CD8-positive, alpha-beta T cell (primary cell): ENCODE measurements at regions of chr9 and their contacts with region 1.

Region 1: GRCh38 chr9:18255158-18255629 is 218.8 kb upstream of the ADAMTSL1 start:
- DNase-seq: peak; percentile 25 to 81 (median 71)
- ATAC-seq: peak; percentile 78
- H3K4me3 ChIP-seq: no peak overlapping the region
- H3K4me3 Mint-ChIP-seq: no peak overlapping the region
- H3K27ac ChIP-seq: no peak overlapping the region
- H3K27ac Mint-ChIP-seq: no peak overlapping the region
- H3K4me1 ChIP-seq: no peaks in the 10 kb centered on the region
- H3K4me1 Mint-ChIP-seq: no peaks in the 10 kb centered on the region
- H3K27me3 ChIP-seq: no peaks in the 10 kb centered on the region
- H3K27me3 Mint-ChIP-seq: peaks cover 9% of the 10 kb centered on the region
- CTCF ChIP-seq: peak; percentile 100

Region 2: DNA sequence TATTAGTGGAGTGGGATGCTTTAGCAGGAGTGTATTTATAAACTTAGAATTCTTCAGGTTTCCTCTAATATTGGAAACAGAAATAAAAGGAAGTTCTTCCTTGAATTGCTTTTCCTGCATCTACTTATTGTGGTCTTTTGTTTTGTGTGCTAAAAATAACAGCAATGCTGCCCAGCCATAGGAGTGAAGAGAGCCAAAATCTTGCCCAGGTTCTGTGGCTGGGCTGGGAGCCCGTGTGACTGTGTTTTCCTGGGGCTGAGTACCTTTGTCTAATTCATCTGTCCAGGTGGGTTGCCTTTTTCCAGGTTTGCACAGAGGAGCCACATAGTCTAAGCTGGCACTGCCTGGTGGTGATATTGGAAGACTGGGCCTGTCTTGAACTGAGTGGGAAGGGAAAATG is 39.0 kb after region 1 on chr9:
- CTCF ChIA-PET with region 1: no interaction called
- POLR2A ChIA-PET with region 1: no interaction called
- intact Hi-C with region 1: no loop called
- DNase-seq: no peak
- ATAC-seq: no peak
- H3K4me3 ChIP-seq: no peak overlapping the region
- H3K4me3 Mint-ChIP-seq: no peak overlapping the region
- H3K27ac ChIP-seq: no peak overlapping the region
- H3K27ac Mint-ChIP-seq: no peak overlapping the region
- H3K4me1 ChIP-seq: no peaks in the 10 kb centered on the region
- H3K4me1 Mint-ChIP-seq: no peaks in the 10 kb centered on the region
- H3K27me3 ChIP-seq: no peaks in the 10 kb centered on the region
- H3K27me3 Mint-ChIP-seq: peaks cover 3% of the 10 kb centered on the region
- CTCF ChIP-seq: no peak

Region 3: GRCh38 chr9:19331877-19332276 is 1076.7 kb after region 1 on chr9:
- CTCF ChIA-PET with region 1: no interaction called
- POLR2A ChIA-PET with region 1: no interaction called
- intact Hi-C with region 1: loop called in 1 of 2 experiments (anchors 10 kb)
- DNase-seq: no peak
- ATAC-seq: no peak
- H3K4me3 ChIP-seq: no peak overlapping the region
- H3K4me3 Mint-ChIP-seq: no peak overlapping the region
- H3K27ac ChIP-seq: no peak overlapping the region
- H3K27ac Mint-ChIP-seq: no peak overlapping the region
- H3K4me1 ChIP-seq: no peaks in the 10 kb centered on the region
- H3K4me1 Mint-ChIP-seq: no peaks in the 10 kb centered on the region
- H3K27me3 ChIP-seq: no peaks in the 10 kb centered on the region
- H3K27me3 Mint-ChIP-seq: no peaks in the 10 kb centered on the region
- CTCF ChIP-seq: no peak

Region 4: DNA sequence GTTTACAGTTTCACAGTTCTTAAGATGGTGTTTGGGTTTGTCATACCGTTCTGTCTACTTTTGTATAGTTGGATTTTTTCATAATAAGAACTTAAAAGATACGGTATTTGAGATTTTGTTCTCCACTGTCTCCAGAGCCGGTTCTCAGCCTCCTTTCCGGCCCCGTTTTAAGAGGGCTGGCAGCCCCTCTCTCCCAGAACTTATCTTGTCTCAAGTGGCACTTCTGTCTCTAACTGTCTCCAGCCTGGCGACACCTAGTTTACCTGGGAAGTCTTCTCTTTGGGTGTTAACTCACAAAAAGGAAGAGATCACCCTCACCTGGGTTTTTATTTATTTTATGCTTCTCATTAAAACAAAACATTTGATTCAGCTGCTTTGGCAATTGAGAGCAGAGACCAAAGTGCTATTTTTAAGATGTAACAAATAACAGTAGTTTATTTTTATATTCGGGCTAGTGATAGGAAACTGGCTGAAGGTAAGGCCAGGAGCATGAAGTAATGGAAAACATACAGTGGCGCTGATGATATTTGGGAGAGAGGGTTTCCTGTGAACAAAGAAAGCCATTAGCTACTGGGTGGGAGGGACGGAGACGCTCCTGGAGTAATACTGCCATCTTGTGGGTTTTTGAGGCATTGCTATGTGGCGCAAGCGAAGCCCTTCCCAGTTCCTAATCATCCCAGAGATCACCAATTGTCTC is 1202.0 kb after region 1 on chr9:
- CTCF ChIA-PET with region 1: interaction called, 14 read pairs
- POLR2A ChIA-PET with region 1: no interaction called
- intact Hi-C with region 1: loop called in 1 of 2 experiments (anchors 1 kb)
- DNase-seq: peak; percentile 10 to 81 (median 59)
- ATAC-seq: peak; percentile 96
- H3K4me3 ChIP-seq: no peak overlapping the region
- H3K4me3 Mint-ChIP-seq: peak overlapping the region; percentile 24
- H3K27ac ChIP-seq: no peak overlapping the region
- H3K27ac Mint-ChIP-seq: no peak overlapping the region
- H3K4me1 ChIP-seq: peaks cover 7% of the 10 kb centered on the region
- H3K4me1 Mint-ChIP-seq: peaks cover 5% of the 10 kb centered on the region
- H3K27me3 ChIP-seq: no peaks in the 10 kb centered on the region
- H3K27me3 Mint-ChIP-seq: peaks cover 5% of the 10 kb centered on the region
- CTCF ChIP-seq: peak; percentile 89